ENCODE measurements at regions of chr17 and their contacts with region 1.

Region 1: DNA sequence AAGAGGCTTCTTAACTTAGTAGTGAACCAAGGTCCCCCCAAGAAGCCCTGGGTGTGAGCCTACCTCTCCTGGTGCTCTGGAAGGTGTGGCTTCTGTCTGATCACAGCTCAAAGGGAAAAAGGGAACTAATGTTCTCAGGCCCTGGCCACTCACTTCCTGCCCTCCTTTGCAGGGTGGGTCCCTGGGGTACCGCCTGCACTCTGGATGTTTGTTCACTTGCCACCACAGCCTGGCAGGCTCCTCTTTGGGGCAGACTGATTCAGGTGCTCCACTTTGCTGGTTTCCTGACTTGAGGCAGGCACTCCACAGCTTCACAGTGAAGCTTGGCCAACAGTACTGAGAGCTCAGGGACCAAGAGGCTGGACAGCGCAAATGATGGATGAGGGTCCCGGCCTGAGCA is 5.9 kb upstream of the MYO15A start:
- DNase-seq: peak; percentile 45 to 88 (median 85)
- H3K4me3 ChIP-seq: no peak overlapping the region
- H3K27ac ChIP-seq: no peak overlapping the region
- H3K4me1 ChIP-seq: peaks cover 0 to 13% (median 12%) of the 10 kb centered on the region in 4 experiments
- H3K27me3 ChIP-seq: no peaks in the 10 kb centered on the region

Region 2: GRCh38 chr17:18076936-18077335 is 25.7 kb before region 1 on chr17:
- CTCF ChIA-PET with region 1: no interaction called
- POLR2A ChIA-PET with region 1: no interaction called
- DNase-seq: no peak
- H3K4me3 ChIP-seq: no peak overlapping the region
- H3K27ac ChIP-seq: no peak overlapping the region
- H3K4me1 ChIP-seq: no peaks in the 10 kb centered on the region
- H3K27me3 ChIP-seq: no peaks in the 10 kb centered on the region

Region 3: GRCh38 chr17:18087610-18088491 is 14.8 kb before region 1 on chr17 and contains the start of gene DRG2:
- CTCF ChIA-PET with region 1: interaction called, 11 read pairs
- POLR2A ChIA-PET with region 1: no interaction called
- DNase-seq: peak; percentile 92 to 94 (median 93)
- H3K4me3 ChIP-seq: peak within 1 kb of the TSS; percentile 71 to 96 (median 89)
- H3K27ac ChIP-seq: peak within 1 kb of the TSS; percentile 50 to 86
- H3K4me1 ChIP-seq: peaks cover 6 to 15% (median 9%) of the 10 kb centered on the region in 4 experiments
- H3K27me3 ChIP-seq: no peaks in the 10 kb centered on the region